SK-N-SH (cell line): ENCODE measurements at regions of chr2 and their contacts with region 1.

Region 1: DNA sequence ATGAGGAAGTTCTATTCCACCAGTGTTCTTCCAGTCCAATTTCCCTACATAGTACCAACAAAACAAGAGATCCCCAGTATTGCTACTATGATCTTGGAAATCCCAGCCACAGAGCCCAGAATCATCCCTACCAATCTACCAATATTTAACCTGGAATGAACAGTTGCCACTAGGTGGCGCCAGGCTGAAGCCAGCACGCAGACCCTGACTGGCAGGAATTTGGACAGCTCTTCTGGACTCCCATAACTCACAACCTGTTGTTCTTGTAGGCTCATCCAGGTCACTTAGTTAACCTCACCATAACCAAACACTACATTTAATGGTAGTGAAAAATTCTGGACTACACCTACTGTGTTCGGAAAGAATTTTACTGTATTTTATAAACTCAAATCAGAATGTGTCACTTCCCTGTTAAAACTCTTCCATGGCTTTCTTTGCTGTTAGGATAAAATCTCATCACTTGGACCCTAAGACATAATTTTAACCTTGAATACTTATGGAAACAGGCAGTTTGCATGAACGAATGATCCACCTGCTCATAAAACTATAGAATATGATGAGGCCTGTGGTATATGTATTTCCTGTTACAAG is 59.8 kb upstream of the SLC38A11 start:
- DNase-seq: peak; percentile 70
- H3K4me3 ChIP-seq: peak overlapping the region in 1 of 2 experiments; percentile 23; a peak in 1 of 4 replicates
- H3K27ac ChIP-seq: no peak overlapping the region
- H3K4me1 ChIP-seq: peaks cover 0 to 5% of the 10 kb centered on the region in 2 experiments; a peak in 2 of 4 replicates
- H3K27me3 ChIP-seq: no peaks in the 10 kb centered on the region
- CTCF ChIP-seq: peak; percentile 97
- EP300 ChIP-seq: no peak
- RAD21 ChIP-seq: peak; percentile 84

Region 2: GRCh38 chr2:164530464-164530863 is 484.7 kb before region 1 on chr2:
- CTCF ChIA-PET with region 1: no interaction called
- POLR2A ChIA-PET with region 1: no interaction called
- DNase-seq: no peak
- H3K4me3 ChIP-seq: no peak overlapping the region
- H3K27ac ChIP-seq: no peak overlapping the region
- H3K4me1 ChIP-seq: no peaks in the 10 kb centered on the region; a peak in 1 of 4 replicates
- H3K27me3 ChIP-seq: no peaks in the 10 kb centered on the region
- CTCF ChIP-seq: no peak
- EP300 ChIP-seq: no peak
- RAD21 ChIP-seq: no peak

Region 3: GRCh38 chr2:164948540-164948939 is 66.6 kb before region 1 on chr2:
- CTCF ChIA-PET with region 1: no interaction called
- POLR2A ChIA-PET with region 1: no interaction called
- DNase-seq: no peak
- H3K4me3 ChIP-seq: no peak overlapping the region
- H3K27ac ChIP-seq: no peak overlapping the region
- H3K4me1 ChIP-seq: no peaks in the 10 kb centered on the region; a peak in 1 of 4 replicates
- H3K27me3 ChIP-seq: no peaks in the 10 kb centered on the region
- CTCF ChIP-seq: no peak
- EP300 ChIP-seq: no peak
- RAD21 ChIP-seq: no peak

Region 4: GRCh38 chr2:165055082-165055851 is 40.1 kb after region 1 on chr2:
- CTCF ChIA-PET with region 1: interaction called, 19 read pairs
- POLR2A ChIA-PET with region 1: no interaction called
- DNase-seq: peak; percentile 49
- H3K4me3 ChIP-seq: no peak overlapping the region; a peak in 1 of 4 replicates
- H3K27ac ChIP-seq: peak overlapping the region in 1 of 2 experiments; percentile 89; a peak in 2 of 4 replicates
- H3K4me1 ChIP-seq: peaks cover 0 to 11% of the 10 kb centered on the region in 2 experiments; a peak in 2 of 4 replicates
- H3K27me3 ChIP-seq: no peaks in the 10 kb centered on the region
- CTCF ChIP-seq: no peak
- EP300 ChIP-seq: peak in 1 of 2 experiments; percentile 53; a peak in 1 of 4 replicates
- RAD21 ChIP-seq: no peak

Region 5: GRCh38 chr2:165126244-165126643 is 111.1 kb after region 1 on chr2:
- CTCF ChIA-PET with region 1: interaction called, 10 read pairs
- POLR2A ChIA-PET with region 1: no interaction called
- DNase-seq: no peak
- H3K4me3 ChIP-seq: no peak overlapping the region
- H3K27ac ChIP-seq: no peak overlapping the region
- H3K4me1 ChIP-seq: no peaks in the 10 kb centered on the region; a peak in 1 of 4 replicates
- H3K27me3 ChIP-seq: no peaks in the 10 kb centered on the region
- CTCF ChIP-seq: no peak
- EP300 ChIP-seq: no peak
- RAD21 ChIP-seq: no peak

Region 6: GRCh38 chr2:165191096-165191728 is 176.1 kb after region 1 on chr2:
- CTCF ChIA-PET with region 1: interaction called, 14 read pairs
- POLR2A ChIA-PET with region 1: no interaction called
- DNase-seq: no peak
- H3K4me3 ChIP-seq: no peak overlapping the region
- H3K27ac ChIP-seq: no peak overlapping the region
- H3K4me1 ChIP-seq: peaks cover 0 to 2% of the 10 kb centered on the region in 2 experiments; a peak in 2 of 4 replicates
- H3K27me3 ChIP-seq: no peaks in the 10 kb centered on the region
- CTCF ChIP-seq: no peak
- EP300 ChIP-seq: no peak
- RAD21 ChIP-seq: no peak

Region 7: DNA sequence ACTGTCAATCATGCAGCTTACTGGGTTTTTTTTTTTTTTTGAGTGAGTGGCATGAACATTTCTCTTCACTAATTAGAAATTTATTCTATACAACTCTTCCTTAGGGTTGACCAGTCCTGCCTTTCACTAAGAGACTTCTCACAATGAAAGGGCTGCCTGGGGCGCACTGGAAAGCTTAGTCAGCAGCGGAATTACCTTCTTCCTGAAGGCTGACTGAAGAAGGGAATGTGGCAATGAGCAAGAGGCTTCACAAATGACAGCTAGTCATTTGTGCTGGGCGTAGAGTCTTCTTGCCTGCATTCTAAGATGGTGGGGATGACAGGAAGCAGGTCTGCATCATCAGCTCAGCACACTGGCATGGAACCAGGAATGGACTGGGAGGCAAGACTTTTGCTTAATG is 204.3 kb after region 1 on chr2:
- CTCF ChIA-PET with region 1: interaction called, 23 read pairs
- POLR2A ChIA-PET with region 1: no interaction called
- DNase-seq: no peak
- H3K4me3 ChIP-seq: no peak overlapping the region
- H3K27ac ChIP-seq: no peak overlapping the region
- H3K4me1 ChIP-seq: no peaks in the 10 kb centered on the region; a peak in 1 of 4 replicates
- H3K27me3 ChIP-seq: no peaks in the 10 kb centered on the region
- CTCF ChIP-seq: no peak
- EP300 ChIP-seq: no peak
- RAD21 ChIP-seq: no peak

Region 8: GRCh38 chr2:165874445-165875039 is 859.4 kb after region 1 on chr2:
- CTCF ChIA-PET with region 1: interaction called, 14 read pairs
- POLR2A ChIA-PET with region 1: no interaction called
- DNase-seq: peak; percentile 44
- H3K4me3 ChIP-seq: no peak overlapping the region; a peak in 1 of 4 replicates
- H3K27ac ChIP-seq: no peak overlapping the region; a peak in 1 of 4 replicates
- H3K4me1 ChIP-seq: no peaks in the 10 kb centered on the region
- H3K27me3 ChIP-seq: no peaks in the 10 kb centered on the region
- CTCF ChIP-seq: peak; percentile 79
- EP300 ChIP-seq: no peak
- RAD21 ChIP-seq: peak; percentile 96